ENCODE measurements at regions of chr2 and their contacts with region 1.

Region 1: DNA sequence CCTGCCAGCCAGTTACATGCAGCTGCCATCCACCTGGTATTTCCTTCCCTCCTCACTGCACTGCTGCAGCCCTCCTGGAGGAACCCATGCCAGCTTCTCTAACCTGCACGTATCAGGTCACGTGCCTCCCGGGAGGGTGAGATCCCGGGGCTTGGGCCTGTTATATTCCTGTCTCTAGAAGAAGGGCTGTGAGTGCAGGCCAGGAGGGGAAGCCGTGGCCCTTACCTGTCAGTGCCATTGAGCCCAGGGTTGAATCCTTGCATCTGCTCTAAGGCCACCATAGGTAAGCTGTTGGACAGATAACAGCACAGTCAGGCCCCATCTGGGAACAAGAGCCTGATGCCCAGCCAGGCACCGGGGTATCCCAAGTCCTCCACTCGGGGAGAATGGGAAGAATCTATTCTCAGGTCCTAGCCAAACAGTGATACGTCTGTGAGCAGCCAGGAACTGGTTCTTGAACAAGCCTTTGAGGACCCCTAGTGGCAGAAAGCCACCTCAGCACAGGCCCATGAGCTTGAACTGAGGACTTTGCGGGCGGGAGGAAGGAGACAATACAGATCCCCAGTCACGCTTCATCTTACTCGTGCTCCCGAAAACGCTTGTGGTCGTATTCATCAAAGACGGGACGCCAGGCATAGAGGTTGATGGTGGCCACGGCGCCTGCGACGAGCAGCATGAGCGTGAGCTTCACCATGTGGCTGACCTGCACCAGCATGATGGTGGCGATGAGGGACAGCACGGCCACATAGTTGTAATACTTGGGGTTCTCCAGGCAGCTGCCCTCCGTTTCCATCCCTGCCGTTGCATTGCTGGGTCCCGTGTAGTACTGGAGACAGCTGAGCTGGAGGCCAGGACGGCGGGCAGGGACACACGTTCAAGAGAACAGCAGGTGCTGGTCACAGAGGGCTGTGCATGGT is 34.4 kb downstream of the CENPO start:
- DNase-seq: peak; percentile 85
- H3K4me3 Mint-ChIP-seq: no peak overlapping the region
- H3K27ac Mint-ChIP-seq: no peak overlapping the region
- H3K4me1 Mint-ChIP-seq: peaks cover 17% of the 10 kb centered on the region
- H3K27me3 Mint-ChIP-seq: no peaks in the 10 kb centered on the region

Region 2: GRCh38 chr2:24409700-24410556 is 417.7 kb before region 1 on chr2:
- CTCF ChIA-PET with region 1: interaction called, 61 read pairs
- intact Hi-C with region 1: loop called (anchors 1 kb)
- DNase-seq: peak; percentile 56
- H3K4me3 Mint-ChIP-seq: no peak overlapping the region
- H3K27ac Mint-ChIP-seq: no peak overlapping the region
- H3K4me1 Mint-ChIP-seq: no peaks in the 10 kb centered on the region
- H3K27me3 Mint-ChIP-seq: peaks cover 4% of the 10 kb centered on the region

Region 3: DNA sequence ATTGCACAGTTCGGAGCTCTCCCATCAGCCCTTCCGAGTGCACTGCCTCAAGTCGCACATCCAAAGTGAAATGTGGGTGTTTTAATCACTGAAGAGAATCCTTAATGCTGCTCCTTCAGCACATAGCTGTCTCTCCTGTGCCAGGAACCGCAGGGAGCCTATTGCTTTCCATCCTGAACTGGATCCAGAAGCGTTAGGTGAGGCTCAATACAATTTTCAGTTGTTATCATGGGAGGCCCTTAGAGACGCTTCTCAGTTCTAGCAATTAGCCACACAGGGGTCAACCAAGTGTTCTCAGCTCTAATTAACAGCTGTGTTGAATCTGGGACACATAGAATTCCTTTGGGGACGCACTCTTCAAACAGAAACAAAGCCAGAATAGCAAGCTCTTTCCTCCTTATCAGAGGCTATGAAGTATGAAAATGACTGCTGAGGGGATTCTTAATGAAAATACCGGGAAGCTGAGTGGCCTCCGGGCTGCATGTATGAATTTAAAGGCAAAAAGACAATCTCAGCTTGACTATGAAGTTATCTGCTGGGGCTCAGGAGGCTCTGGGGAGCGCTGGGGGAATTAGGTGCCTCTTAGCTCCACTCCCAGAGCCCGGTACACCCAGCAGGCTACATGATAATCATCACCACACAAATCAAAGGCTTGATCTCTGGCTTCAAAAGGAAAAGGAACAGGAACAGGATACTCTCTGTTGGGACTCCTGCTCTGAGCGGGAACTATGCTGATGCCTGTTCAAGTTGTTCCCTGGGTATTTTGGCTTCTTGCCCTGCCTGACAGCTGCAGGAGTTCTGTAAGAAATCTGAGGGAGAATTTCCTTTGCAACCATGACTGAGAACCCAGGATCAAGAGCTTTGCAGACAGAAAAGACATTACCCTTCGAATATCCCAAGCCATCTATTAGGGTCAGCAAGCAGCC is 391.9 kb before region 1 on chr2:
- CTCF ChIA-PET with region 1: no interaction called
- intact Hi-C with region 1: no loop called
- DNase-seq: no peak
- H3K4me3 Mint-ChIP-seq: no peak overlapping the region
- H3K27ac Mint-ChIP-seq: no peak overlapping the region
- H3K4me1 Mint-ChIP-seq: no peaks in the 10 kb centered on the region
- H3K27me3 Mint-ChIP-seq: no peaks in the 10 kb centered on the region

Region 4: DNA sequence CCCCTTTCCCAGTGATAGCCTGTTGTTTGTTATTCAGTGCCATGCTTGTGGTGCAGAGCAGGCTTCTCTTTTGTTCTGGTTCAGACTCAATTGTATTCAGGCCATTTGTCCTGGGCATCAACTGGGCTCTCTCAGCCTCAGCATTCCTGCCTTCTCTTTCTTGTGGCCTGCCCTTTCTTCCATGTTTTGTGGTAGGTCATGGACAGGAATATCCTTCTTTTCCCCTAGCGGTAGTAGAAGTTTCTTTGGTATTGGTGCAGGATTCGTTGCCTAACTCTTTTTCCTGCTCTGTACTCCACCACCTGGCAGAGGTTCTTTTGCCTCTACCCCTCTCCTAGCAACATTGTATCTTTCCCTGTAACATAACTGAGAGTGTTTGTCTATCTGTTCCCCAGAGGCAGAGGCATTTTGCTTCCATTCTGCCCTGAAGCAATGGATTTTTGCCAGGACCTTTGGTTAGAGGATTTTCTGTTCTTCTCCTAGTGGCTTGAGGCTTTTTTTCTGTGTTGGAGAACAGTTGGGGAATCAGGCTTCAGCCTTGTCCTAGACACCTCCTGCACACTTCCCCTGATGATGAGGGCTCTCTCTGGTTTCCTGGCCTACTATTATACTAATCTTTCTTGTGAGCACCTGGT is 268.0 kb before region 1 on chr2:
- CTCF ChIA-PET with region 1: no interaction called
- intact Hi-C with region 1: loop called (anchors 5 kb)
- DNase-seq: no peak
- H3K4me3 Mint-ChIP-seq: no peak overlapping the region
- H3K27ac Mint-ChIP-seq: no peak overlapping the region
- H3K4me1 Mint-ChIP-seq: peaks cover 24% of the 10 kb centered on the region
- H3K27me3 Mint-ChIP-seq: no peaks in the 10 kb centered on the region

Region 5: DNA sequence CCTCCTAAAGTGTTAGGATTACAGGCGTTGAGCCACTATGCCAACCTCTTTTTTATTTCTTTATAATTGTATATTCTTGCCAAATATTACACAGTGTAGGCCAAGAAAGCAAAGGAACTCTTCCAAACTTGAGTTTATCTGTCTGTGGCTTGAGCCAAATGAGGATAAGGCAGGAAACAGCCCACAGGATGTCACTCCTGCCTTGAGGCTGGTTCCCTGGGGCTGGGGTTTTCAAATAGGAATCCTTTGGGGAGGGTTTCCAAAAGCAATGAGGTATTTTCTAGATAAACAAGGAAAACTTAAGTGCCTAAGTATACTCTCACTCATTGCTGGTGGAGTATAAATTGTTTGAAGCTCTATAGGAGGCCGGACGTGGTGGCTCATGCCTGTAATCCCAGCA is 36.1 kb after region 1 on chr2:
- CTCF ChIA-PET with region 1: no interaction called
- intact Hi-C with region 1: no loop called
- DNase-seq: no peak
- H3K4me3 Mint-ChIP-seq: no peak overlapping the region
- H3K27ac Mint-ChIP-seq: no peak overlapping the region
- H3K4me1 Mint-ChIP-seq: no peaks in the 10 kb centered on the region
- H3K27me3 Mint-ChIP-seq: no peaks in the 10 kb centered on the region

Region 6: DNA sequence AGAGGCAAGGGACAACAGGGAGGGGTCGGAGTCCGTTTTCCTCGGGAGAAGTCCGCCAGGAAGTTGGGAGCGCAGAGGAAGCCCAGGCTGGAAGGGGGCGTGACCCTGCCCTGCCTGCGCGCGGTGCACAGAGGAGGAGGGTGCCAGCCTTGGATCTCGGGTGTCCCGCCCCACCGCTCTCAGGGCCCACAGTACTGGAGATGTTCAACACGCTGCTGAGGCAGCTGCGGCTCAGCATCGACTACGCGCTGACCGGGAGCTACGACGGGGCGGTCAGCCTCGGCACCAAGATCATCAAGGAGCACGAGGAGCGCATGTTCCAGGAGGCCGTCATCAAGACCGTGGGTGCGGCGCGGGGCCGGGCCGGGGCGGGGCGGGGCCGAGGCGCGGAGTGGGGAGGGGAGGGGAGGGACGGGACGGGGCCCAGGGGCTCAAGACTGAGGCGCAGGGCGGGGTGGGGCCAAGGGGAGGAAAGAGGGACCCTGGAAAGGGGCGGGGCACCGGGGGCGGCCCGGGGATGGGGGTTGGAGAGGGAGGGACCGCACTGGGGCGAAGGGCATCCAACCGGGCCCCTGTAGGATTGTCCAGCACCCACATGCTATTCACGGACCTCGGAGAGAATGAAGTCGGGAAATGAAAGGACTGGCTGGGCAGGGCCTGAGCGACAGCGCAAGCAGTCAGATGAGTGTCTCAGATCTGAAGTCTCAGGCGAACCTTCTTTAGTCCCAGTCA is 304.2 kb after region 1 on chr2:
- CTCF ChIA-PET with region 1: interaction called, 3 read pairs
- intact Hi-C with region 1: loop called (anchors 10 kb)
- DNase-seq: peak; percentile 11
- H3K4me3 Mint-ChIP-seq: peak overlapping the region; percentile 60
- H3K27ac Mint-ChIP-seq: peak overlapping the region; percentile 39
- H3K4me1 Mint-ChIP-seq: peaks cover 10% of the 10 kb centered on the region
- H3K27me3 Mint-ChIP-seq: peaks cover 48% of the 10 kb centered on the region

Region 7: DNA sequence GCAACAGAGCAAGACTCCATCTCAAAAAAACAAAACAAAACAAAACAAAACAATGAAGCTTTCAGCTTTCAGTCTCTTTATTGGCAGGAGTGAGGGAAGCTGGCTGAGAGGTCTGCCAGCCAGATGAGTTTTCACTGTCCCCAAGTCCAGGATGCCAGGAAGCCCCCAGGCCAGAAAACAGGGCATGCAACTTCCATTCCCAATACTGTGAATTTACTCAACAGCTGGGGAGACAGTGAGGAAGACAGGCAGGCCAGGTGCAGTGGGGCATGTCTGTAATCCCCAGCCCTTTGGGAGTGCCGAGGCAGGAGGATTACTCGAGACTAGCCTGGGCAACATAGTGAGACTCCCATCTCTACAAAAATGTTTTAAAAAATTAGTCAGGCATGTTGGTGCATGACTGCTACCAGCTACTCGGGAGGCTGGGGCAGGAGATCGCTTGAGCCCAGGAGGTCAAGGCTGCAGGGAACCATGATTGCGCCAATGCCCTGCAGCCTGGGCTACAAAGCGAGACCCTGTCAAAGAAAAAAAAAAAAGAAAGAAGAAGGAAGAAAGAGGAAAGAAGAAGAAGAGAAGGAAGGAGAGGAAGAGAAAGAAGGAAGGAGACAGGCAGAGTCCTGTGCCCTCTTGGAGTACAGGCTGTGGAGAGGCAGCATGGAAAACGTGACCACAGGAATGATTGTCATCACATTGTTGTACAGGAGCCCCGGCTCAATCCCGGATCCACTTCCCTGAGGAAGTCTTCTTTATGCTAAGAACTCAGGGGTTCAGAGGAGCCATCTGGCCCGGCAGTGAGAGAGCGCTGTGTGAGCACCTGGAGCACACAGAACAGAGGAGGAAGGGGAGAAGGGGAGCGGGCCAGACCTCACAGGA is 370.0 kb after region 1 on chr2:
- CTCF ChIA-PET with region 1: no interaction called
- intact Hi-C with region 1: loop called (anchors 5 kb)
- DNase-seq: no peak
- H3K4me3 Mint-ChIP-seq: no peak overlapping the region
- H3K27ac Mint-ChIP-seq: no peak overlapping the region
- H3K4me1 Mint-ChIP-seq: peaks cover 6% of the 10 kb centered on the region
- H3K27me3 Mint-ChIP-seq: no peaks in the 10 kb centered on the region

Measured in activated naive CD4-positive, alpha-beta T cell treated with anti-CD3 and anti-CD28 coated beads for 36 hours (primary cell).